ENCODE measurements at regions of chr10 and their contacts with region 1.

Region 1: DNA sequence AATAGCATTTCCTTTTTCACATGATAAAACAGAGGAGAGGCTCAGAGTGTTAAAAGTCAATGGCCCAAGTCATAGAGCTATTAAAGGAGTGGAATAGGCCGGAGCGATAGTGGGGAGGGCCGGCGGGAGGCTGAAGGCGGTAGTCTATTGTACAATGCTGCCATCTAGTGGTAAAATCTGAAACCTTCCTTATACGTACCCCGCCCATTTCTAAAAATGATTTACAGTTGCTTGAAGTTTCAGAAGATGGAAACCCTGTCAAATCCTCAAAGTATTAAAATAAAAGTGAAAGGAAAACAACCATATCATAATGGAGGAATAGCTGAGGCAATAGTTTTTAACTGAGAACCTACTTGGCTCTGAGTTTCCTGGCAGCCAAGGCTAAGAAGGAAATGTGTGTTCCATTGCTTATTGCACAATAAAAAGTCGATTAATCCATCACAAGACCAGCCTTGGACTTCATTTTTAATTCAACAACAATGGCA is 209.1 kb downstream of the CCSER2 start:
- DNase-seq: peak; percentile 48
- H3K4me3 Mint-ChIP-seq: no peak overlapping the region
- H3K27ac Mint-ChIP-seq: no peak overlapping the region
- H3K4me1 Mint-ChIP-seq: peaks cover 31% of the 10 kb centered on the region
- H3K27me3 Mint-ChIP-seq: peaks cover 16% of the 10 kb centered on the region

Region 2: DNA sequence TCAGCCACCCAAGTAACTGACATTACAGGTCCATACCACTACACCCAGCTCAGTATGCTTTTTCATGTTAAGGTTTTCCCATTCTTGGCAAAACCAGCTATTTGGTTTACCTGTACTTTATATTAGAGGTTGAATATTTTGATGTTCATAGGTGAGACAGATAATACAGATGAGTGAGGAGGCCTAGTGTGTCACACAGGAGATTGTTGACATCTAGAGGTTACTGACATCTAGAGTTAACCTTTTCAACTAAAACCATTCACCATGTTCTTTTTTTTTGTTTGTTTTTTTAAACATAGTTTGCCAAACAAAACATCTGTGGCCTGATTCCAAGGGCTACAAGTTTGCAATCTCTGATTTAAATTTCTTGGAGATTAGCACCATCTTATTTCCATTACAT is 390.1 kb before region 1 on chr10:
- CTCF ChIA-PET with region 1: interaction called, 11 read pairs
- POLR2A ChIA-PET with region 1: no interaction called
- intact Hi-C with region 1: no loop called
- DNase-seq: no peak
- H3K4me3 Mint-ChIP-seq: no peak overlapping the region
- H3K27ac Mint-ChIP-seq: no peak overlapping the region
- H3K4me1 Mint-ChIP-seq: peaks cover 25% of the 10 kb centered on the region
- H3K27me3 Mint-ChIP-seq: no peaks in the 10 kb centered on the region

Region 3: GRCh38 chr10:84328418-84329195 is 208.9 kb before region 1 on chr10 and contains the start of gene CCSER2:
- CTCF ChIA-PET with region 1: interaction called, 16 read pairs
- POLR2A ChIA-PET with region 1: interaction called, 4 read pairs
- intact Hi-C with region 1: loop called (anchors 1 kb)
- DNase-seq: peak; percentile 98
- H3K4me3 Mint-ChIP-seq: peak within 1 kb of the TSS; percentile 88
- H3K27ac Mint-ChIP-seq: peak within 1 kb of the TSS; percentile 98
- H3K4me1 Mint-ChIP-seq: peaks cover 30% of the 10 kb centered on the region
- H3K27me3 Mint-ChIP-seq: no peaks in the 10 kb centered on the region
- total RNA-seq, gene CCSER2: 69.8 to 73.5 TPM

Region 4: DNA sequence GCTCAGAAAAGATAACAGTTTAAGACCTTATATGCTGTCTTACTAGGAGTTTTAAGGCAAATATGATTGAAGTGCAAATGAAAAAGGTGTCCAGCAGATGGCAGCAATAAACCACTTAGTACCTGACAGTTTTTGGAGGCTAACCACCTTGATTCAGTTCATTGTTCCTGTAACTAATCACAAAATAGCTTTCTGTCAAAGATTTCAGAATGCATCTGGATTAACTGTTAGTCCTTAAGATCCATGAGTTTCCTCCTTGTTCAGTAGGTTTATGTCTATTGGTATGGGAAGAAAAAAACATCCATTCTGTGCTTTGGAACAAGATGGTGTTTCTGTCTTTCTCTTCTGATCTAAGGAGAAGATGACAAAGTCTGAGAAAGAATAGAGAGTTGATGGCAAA is 162.5 kb before region 1 on chr10:
- CTCF ChIA-PET with region 1: interaction called, 88 read pairs
- POLR2A ChIA-PET with region 1: no interaction called
- intact Hi-C with region 1: loop called (anchors 1 kb)
- DNase-seq: peak; percentile 18
- H3K4me3 Mint-ChIP-seq: no peak overlapping the region
- H3K27ac Mint-ChIP-seq: peak overlapping the region; percentile 65
- H3K4me1 Mint-ChIP-seq: peaks cover 51% of the 10 kb centered on the region
- H3K27me3 Mint-ChIP-seq: no peaks in the 10 kb centered on the region

Region 5: GRCh38 chr10:84548869-84549268 is 11.4 kb after region 1 on chr10:
- CTCF ChIA-PET with region 1: interaction called, 31 read pairs
- POLR2A ChIA-PET with region 1: no interaction called
- intact Hi-C with region 1: no loop called
- DNase-seq: peak; percentile 31
- H3K4me3 Mint-ChIP-seq: no peak overlapping the region
- H3K27ac Mint-ChIP-seq: no peak overlapping the region
- H3K4me1 Mint-ChIP-seq: no peaks in the 10 kb centered on the region
- H3K27me3 Mint-ChIP-seq: peaks cover 4% of the 10 kb centered on the region

Measured in activated CD4-positive, alpha-beta memory T cell treated with anti-CD3 and anti-CD28 coated beads for 36 hours (primary cell).